ENCODE measurements at regions of chr17 and their contacts with region 1.

Region 1: DNA sequence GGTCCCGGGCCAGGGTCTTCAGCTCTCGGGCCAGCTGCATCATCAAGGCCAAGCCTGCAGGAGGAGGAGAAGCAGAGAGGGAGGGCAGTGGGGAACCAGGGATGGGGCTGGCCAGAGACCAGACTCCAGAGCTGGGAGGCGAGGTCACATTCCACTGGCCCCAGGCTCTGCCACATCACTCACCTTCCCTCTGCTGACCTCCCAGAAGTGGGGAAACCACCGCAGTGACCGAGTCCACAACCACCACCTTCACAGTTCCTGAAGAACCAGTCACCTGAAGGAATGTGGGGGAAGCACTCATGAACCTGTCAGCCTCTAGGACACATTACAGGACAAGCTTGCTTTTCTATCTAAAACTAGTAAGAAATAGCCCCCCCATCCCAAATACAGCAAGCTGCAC is 16.4 kb downstream of the RAD51D start:
- DNase-seq: no peak
- H3K4me3 ChIP-seq: no peak overlapping the region
- H3K27ac ChIP-seq: no peak overlapping the region
- H3K4me1 ChIP-seq: no peaks in the 10 kb centered on the region
- H3K27me3 ChIP-seq: no peaks in the 10 kb centered on the region
- CTCF ChIP-seq: no peak

Region 2: GRCh38 chr17:35011671-35012210 is 91.5 kb before region 1 on chr17:
- CTCF ChIA-PET with region 1: interaction called, 5 read pairs
- dilution Hi-C with region 1: loop called (anchors 5 kb)
- in situ Hi-C with region 1: no loop called
- intact Hi-C with region 1: no loop called
- DNase-seq: no peak
- H3K4me3 ChIP-seq: no peak overlapping the region
- H3K27ac ChIP-seq: no peak overlapping the region
- H3K4me1 ChIP-seq: no peaks in the 10 kb centered on the region
- H3K27me3 ChIP-seq: no peaks in the 10 kb centered on the region
- CTCF ChIP-seq: no peak

Region 3: DNA sequence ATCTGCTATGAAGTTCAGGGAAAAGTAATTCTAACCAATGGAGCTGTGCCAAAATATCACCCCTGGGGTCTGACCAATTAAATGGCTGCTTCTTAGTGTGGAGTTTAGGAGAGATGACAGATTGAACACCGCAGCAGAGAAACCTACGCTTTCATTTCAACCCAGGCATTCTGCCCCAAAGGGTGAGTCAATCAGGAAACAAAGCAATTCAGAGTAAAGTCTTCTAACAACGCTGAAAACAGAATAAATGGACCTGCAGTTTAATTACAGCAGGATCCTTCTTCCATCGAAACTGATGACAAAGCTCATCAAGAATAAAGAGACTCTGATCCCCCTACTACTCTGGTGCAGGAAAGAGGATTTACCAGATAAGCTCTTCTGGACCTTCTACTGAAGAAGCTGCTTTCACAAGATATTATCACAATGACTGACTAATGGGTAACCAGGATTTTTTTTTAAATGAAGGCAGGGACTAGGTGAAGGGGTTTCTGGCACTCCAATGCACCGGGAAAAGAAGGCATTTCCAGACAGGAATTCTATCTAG is 56.5 kb before region 1 on chr17:
- CTCF ChIA-PET with region 1: no interaction called
- dilution Hi-C with region 1: no loop called
- in situ Hi-C with region 1: no loop called
- intact Hi-C with region 1: no loop called
- DNase-seq: no peak
- H3K4me3 ChIP-seq: no peak overlapping the region
- H3K27ac ChIP-seq: no peak overlapping the region
- H3K4me1 ChIP-seq: no peaks in the 10 kb centered on the region
- H3K27me3 ChIP-seq: no peaks in the 10 kb centered on the region
- CTCF ChIP-seq: no peak

Region 4: GRCh38 chr17:35141681-35142466 is 38.6 kb after region 1 on chr17 and contains the start of gene NLE1:
- CTCF ChIA-PET with region 1: no interaction called
- dilution Hi-C with region 1: loop called (anchors 5 kb)
- in situ Hi-C with region 1: no loop called
- intact Hi-C with region 1: no loop called
- DNase-seq: peak; percentile 72
- H3K4me3 ChIP-seq: peak within 1 kb of the TSS; percentile 68 to 98 (median 85)
- H3K27ac ChIP-seq: peak within 1 kb of the TSS; percentile 20
- H3K4me1 ChIP-seq: no peaks in the 10 kb centered on the region
- H3K27me3 ChIP-seq: no peaks in the 10 kb centered on the region
- CTCF ChIP-seq: peak; percentile 77 to 93
- total RNA-seq, gene NLE1: 22.2 to 27.4 TPM